ENCODE measurements at regions of chr13 and their contacts with region 1.

Region 1: GRCh38 chr13:32905063-32905863 is 111.0 kb upstream of the KL start:
- DNase-seq: peak; percentile 77
- H3K4me3 Mint-ChIP-seq: peak overlapping the region; percentile 77
- H3K27ac Mint-ChIP-seq: peak overlapping the region; percentile 91
- H3K4me1 Mint-ChIP-seq: peaks cover 42% of the 10 kb centered on the region
- H3K27me3 Mint-ChIP-seq: peaks cover 2% of the 10 kb centered on the region

Region 2: GRCh38 chr13:32390048-32390447 is 515.2 kb before region 1 on chr13:
- intact Hi-C with region 1: no loop called
- DNase-seq: no peak
- H3K4me3 Mint-ChIP-seq: no peak overlapping the region
- H3K27ac Mint-ChIP-seq: no peak overlapping the region
- H3K4me1 Mint-ChIP-seq: peaks cover 17% of the 10 kb centered on the region
- H3K27me3 Mint-ChIP-seq: no peaks in the 10 kb centered on the region

Region 3: GRCh38 chr13:32650705-32651311 is 254.5 kb before region 1 on chr13:
- intact Hi-C with region 1: loop called (anchors 2 kb)
- DNase-seq: peak; percentile 87
- H3K4me3 Mint-ChIP-seq: no peak overlapping the region
- H3K27ac Mint-ChIP-seq: no peak overlapping the region
- H3K4me1 Mint-ChIP-seq: peaks cover 29% of the 10 kb centered on the region
- H3K27me3 Mint-ChIP-seq: no peaks in the 10 kb centered on the region

Region 4: DNA sequence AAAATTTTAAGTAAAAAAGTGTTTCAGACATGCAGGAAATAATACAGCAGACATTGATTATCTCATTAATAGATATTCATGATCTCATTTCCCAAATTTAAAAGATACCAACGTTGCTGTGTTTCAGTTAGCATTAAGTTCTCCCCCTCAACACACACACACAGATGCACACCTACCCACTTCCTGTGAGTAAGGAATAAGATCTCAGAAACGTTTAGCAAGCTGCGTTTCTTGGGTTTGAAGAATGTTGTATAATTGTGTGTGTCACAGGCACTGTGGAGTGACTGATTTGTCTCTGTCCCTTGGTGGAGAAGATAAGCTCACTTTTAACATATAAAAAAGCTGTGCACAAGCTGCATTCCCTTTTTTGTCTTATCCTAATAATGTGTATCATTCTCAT is 122.2 kb before region 1 on chr13:
- intact Hi-C with region 1: loop called (anchors 2 kb)
- DNase-seq: peak; percentile 65
- H3K4me3 Mint-ChIP-seq: no peak overlapping the region
- H3K27ac Mint-ChIP-seq: peak overlapping the region; percentile 1
- H3K4me1 Mint-ChIP-seq: peaks cover 27% of the 10 kb centered on the region
- H3K27me3 Mint-ChIP-seq: no peaks in the 10 kb centered on the region

Region 5: DNA sequence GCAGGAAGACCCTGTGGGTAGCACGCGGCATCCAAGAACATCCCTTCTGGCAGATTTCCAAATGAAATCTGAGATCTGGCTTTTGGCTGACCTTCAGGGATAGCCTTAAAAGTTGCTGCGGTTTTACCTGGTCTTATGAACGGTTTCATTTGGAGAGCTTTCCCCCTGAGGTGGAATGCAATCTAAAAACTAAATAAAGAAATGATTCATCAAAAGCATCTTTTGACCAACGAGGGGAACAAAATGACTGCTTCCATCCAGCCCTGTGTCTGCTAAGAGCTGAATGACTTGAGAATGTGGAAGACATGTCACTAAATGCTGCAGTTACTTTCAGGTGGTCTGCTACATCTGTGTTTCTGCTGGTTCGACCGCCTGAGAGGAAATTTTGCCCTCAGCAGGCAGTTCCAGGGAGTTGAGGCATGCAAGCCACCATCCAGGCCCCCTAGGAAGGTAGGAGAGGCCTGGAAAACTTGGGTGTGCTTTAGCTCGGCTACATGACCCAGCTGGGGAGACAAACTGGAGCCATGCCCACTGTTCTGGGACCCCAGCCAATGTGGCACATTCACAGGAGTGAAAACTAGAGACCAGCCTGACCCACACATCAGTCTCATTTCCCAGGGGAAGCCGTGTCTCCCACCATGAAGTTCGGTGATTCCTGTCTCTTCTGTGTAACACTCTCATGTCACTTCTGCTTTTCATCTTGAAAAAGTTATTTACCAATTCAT is 64.1 kb before region 1 on chr13:
- intact Hi-C with region 1: loop called (anchors 2 kb)
- DNase-seq: no peak
- H3K4me3 Mint-ChIP-seq: no peak overlapping the region
- H3K27ac Mint-ChIP-seq: no peak overlapping the region
- H3K4me1 Mint-ChIP-seq: peaks cover 24% of the 10 kb centered on the region
- H3K27me3 Mint-ChIP-seq: no peaks in the 10 kb centered on the region

Region 6: DNA sequence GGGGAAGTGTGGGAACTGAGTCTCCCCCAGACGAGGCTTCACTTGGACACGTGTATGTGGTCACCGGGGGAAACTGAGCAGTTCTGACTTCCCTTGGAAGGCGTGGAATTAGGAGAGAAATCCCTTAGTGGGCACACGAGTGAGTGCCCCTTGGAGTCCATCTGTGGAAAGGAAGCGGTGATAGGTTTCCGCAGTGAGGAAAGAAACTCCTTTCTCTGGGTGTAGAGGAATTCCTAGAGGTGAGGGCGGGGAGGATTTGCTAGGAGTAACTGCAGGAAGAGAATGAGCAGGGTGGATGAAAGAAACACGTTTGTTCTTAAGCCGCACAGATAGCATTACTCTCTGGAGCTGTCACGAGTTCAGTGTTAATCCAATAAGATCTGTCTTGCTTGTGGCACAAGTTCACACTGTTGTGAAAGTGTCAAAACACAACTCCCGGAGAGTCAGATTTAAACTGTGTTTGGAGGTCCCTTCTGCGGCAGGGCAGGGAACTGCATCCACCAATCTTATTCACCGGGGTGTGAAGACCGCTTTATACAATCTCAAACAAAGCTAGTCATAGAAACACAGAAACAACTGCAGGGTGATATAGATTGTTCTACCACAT is 112.2 kb after region 1 on chr13:
- intact Hi-C with region 1: loop called (anchors 1 kb)
- DNase-seq: peak; percentile 84
- H3K4me3 Mint-ChIP-seq: peak overlapping the region; percentile 76
- H3K27ac Mint-ChIP-seq: peak overlapping the region; percentile 68
- H3K4me1 Mint-ChIP-seq: peaks cover 11% of the 10 kb centered on the region
- H3K27me3 Mint-ChIP-seq: peaks cover 59% of the 10 kb centered on the region

Measured in activated CD4-positive, alpha-beta T cell treated with anti-CD3 and anti-CD28 coated beads, Interleukin-2, amount 10 ng/mL, durations not matched to agents 24 days and 14 days (primary cell).